Naive thymus-derived CD8-positive, alpha-beta T cell (primary cell): ENCODE measurements at regions of chr16 and their contacts with region 1.

Region 1: DNA sequence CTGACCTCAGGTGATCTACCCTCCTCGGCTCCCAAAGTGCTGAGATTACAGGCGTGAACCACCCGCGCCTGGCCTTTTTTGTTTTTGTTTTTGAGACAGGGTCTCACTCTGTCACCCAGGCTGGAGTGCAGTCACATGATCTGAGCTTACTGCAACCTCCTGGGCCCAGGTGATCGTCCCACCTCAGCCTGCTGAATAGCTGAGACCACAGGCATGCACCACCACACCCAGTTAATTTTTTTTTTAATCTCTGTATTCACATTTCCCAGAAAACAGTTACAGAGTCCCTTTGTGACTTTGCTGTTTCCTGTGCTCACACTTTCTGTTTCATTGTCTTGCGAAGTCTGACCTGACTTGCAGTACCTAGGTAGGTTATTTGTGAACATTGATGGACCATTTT is 2.7 kb downstream of the CLUAP1 start:
- DNase-seq: peak in 9 of 10 donors; percentile 18 to 79 (median 47)
- ATAC-seq: peak; percentile 32 to 54
- H3K4me3 Mint-ChIP-seq: peak overlapping the region; percentile 57 to 95 (median 82)
- H3K27ac Mint-ChIP-seq: peak overlapping the region; percentile 85 to 98 (median 95)
- H3K4me1 Mint-ChIP-seq: peaks cover 33 to 74% (median 69%) of the 10 kb centered on the region in 4 donors
- H3K27me3 Mint-ChIP-seq: peaks cover 0 to 2% (median 0%) of the 10 kb centered on the region in 5 donors

Region 2: DNA sequence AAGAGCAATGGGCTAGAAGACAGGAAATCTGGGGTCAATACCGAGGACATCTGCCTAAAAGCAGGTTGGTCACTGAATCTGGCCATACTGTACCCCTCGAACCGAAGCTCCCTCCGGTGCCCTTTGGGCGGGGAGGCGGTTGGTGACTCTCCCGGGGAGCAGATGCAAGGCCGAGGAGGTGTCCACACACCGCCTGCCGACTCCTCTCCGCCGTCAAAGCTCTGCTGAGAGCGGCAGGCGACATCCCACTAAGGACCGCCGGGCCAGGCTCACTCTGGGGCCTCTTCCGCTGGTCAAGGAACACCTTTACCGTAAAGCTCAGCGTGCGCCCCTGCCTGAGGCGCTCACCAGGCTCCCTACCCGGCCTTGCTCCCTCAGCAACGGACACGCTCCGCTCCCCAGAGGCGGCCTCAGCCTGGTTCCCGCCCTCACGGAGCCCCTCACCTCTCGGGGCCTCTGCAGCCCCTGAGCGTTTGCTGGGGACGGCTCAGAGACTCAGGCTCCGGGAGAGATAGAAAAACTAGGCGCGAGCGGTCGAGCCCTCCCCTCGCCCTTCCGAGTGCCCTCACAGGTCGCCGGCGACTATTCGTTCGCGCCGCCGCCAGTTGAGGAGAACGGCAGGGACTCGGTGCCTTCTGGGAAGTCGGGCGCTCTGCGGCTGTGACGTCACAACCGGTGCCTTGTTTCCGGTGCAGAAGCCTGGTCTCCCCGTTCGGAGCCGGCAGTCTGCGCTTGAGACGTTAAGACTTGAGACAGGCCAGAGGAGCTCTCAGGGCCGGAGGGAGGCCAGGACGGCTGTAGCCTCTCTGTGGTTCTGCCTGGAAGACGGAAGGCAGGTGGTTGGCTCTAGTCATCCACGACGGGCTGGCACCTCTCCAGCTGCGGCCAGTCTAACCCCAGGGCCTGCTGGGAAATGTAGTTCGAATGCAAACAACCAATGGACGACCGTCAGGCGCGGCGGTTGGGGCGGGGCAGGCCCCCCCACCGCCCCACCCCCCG is 268.7 kb before region 1 on chr16 and contains the start of gene ZNF200:
- POLR2A ChIA-PET with region 1: no interaction called
- DNase-seq: peak; percentile 85 to 99 (median 92)
- ATAC-seq: peak; percentile 92 to 94
- H3K4me3 Mint-ChIP-seq: peak within 1 kb of the TSS; percentile 92 to 99 (median 95)
- H3K27ac Mint-ChIP-seq: peak within 1 kb of the TSS; percentile 90 to 99 (median 98)
- H3K4me1 Mint-ChIP-seq: peaks cover 18 to 39% (median 34%) of the 10 kb centered on the region in 4 donors
- H3K27me3 Mint-ChIP-seq: no peaks in the 10 kb centered on the region
- polyA plus RNA-seq, gene ZNF200: 6.8 to 14.3 (median 13.9) TPM

Region 3: GRCh38 chr16:3514621-3515020 is 11.1 kb after region 1 on chr16:
- POLR2A ChIA-PET with region 1: interaction called, 27 read pairs
- DNase-seq: no peak
- ATAC-seq: no peak
- H3K4me3 Mint-ChIP-seq: no peak overlapping the region
- H3K27ac Mint-ChIP-seq: peak overlapping the region in 4 of 10 donors; percentile 11 to 67 (median 60)
- H3K4me1 Mint-ChIP-seq: peaks cover 11 to 51% (median 34%) of the 10 kb centered on the region in 4 donors
- H3K27me3 Mint-ChIP-seq: no peaks in the 10 kb centered on the region

Region 4: DNA sequence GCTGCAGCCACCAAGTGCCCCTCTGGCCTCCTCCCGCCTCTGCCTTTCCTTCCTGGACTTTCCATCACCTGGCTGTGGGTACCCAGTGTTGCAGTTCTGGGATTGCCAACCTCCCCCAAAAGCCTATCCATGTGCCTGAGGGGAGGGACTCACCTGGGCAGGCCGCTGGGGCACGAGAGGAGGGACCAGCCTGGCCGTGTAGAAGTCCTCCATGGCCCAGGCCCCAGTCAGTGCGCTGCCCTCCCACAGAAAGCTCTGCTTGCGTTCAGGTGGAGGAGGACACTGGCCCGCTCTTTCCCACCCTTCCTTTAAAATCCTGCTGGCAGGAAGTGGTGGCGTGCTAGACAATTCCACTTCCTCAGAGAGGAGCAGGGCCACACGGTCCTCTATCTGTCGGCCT is 93.7 kb after region 1 on chr16:
- POLR2A ChIA-PET with region 1: no interaction called
- DNase-seq: no peak
- ATAC-seq: no peak
- H3K4me3 Mint-ChIP-seq: no peak overlapping the region
- H3K27ac Mint-ChIP-seq: peak overlapping the region in 1 of 10 donors; percentile 28
- H3K4me1 Mint-ChIP-seq: peaks cover 0 to 6% (median 0%) of the 10 kb centered on the region in 4 donors
- H3K27me3 Mint-ChIP-seq: no peaks in the 10 kb centered on the region

Region 5: GRCh38 chr16:3611146-3611975 is 107.8 kb after region 1 on chr16 and contains the start of gene SLX4:
- POLR2A ChIA-PET with region 1: interaction called, 11 read pairs
- DNase-seq: peak; percentile 86 to 96 (median 92)
- ATAC-seq: peak; percentile 85 to 89
- H3K4me3 Mint-ChIP-seq: peak within 1 kb of the TSS; percentile 92 to 100 (median 99)
- H3K27ac Mint-ChIP-seq: peak within 1 kb of the TSS; percentile 93 to 100 (median 97)
- H3K4me1 Mint-ChIP-seq: peaks cover 30 to 64% (median 60%) of the 10 kb centered on the region in 4 donors
- H3K27me3 Mint-ChIP-seq: no peaks in the 10 kb centered on the region
- polyA plus RNA-seq, gene SLX4: 0.32 to 1.2 (median 0.43) TPM